AG04449 (cell line): ENCODE measurements at regions of chr17 and their contacts with region 1.

Region 1: GRCh38 chr17:75632863-75633485 is at the start of gene SMIM5:
- DNase-seq: peak; percentile 36
- H3K4me3 ChIP-seq: no peak within 1 kb of the TSS
- CTCF ChIP-seq: peak; percentile 91

Region 2: DNA sequence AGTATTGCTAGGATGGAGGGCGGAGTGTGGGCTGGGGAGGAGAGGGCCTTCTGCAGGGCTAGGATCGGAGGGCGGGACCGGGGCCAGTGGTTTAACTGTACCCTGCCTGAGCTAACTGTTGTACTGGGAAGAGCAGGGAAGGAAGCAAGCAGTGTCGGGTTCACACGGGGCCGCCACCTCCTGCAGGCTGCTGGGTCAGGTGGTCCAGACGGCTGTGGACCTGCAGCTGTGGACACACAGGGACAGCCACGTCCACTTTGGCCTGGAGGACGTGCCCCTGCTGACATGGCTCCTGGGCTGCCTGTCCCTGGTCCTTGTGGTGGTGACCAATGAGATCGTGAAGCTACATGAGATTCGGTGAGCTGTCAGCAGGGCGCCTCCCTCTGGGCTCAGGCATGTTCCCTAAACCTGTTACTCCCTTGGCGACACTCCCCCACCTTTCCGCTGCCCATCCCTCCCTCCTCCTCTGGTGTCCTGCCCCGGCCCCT is 134.2 kb before region 1 on chr17:
- CTCF ChIA-PET with region 1: interaction called, 10 read pairs
- POLR2A ChIA-PET with region 1: no interaction called
- DNase-seq: no peak
- H3K4me3 ChIP-seq: no peak overlapping the region
- CTCF ChIP-seq: no peak

Region 3: GRCh38 chr17:75652915-75653549 is 20.1 kb after region 1 on chr17:
- CTCF ChIA-PET with region 1: interaction called, 746 read pairs
- POLR2A ChIA-PET with region 1: interaction called, 7 read pairs
- DNase-seq: no peak
- H3K4me3 ChIP-seq: no peak overlapping the region
- CTCF ChIP-seq: peak; percentile 78

Region 4: GRCh38 chr17:75679706-75680442 is 46.9 kb after region 1 on chr17:
- CTCF ChIA-PET with region 1: interaction called, 40 read pairs
- POLR2A ChIA-PET with region 1: no interaction called
- DNase-seq: no peak
- H3K4me3 ChIP-seq: no peak overlapping the region
- CTCF ChIP-seq: no peak

Region 5: GRCh38 chr17:75703591-75703990 is 70.6 kb after region 1 on chr17:
- CTCF ChIA-PET with region 1: interaction called, 14 read pairs
- POLR2A ChIA-PET with region 1: no interaction called
- DNase-seq: no peak
- H3K4me3 ChIP-seq: no peak overlapping the region
- CTCF ChIP-seq: no peak

Region 6: DNA sequence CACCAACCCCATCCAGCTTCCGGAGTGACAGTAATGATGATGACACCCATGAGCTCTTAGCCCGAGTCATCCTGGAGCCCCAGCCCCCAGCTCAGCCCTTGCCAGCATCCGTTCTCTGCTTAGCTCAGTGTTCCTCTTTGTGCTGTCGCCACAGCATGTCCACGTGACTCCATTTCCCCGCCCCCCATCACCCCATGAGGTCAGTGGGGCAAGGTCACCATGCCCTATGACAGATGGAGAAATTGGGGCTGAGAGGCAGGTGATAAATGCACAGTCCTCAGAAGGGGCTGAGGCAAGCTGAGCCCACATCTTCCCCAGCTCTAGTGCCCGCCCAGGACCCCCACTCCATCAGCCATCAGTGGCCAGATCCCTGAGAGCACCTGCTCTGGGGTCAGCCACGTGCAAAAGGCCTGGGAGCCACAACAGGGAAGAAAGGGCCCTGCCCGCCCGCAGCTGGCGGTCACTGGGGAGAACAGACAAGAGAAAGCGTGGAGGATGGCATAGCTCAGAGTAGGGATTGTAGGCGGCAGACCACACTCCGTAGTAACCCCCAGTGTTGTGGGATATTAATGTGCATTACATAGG is 105.3 kb after region 1 on chr17:
- CTCF ChIA-PET with region 1: interaction called, 25 read pairs
- POLR2A ChIA-PET with region 1: no interaction called
- DNase-seq: no peak
- H3K4me3 ChIP-seq: no peak overlapping the region
- CTCF ChIP-seq: no peak